GM23248 (cell line): ENCODE measurements at regions of chr18 and their contacts with region 1.

Region 1: DNA sequence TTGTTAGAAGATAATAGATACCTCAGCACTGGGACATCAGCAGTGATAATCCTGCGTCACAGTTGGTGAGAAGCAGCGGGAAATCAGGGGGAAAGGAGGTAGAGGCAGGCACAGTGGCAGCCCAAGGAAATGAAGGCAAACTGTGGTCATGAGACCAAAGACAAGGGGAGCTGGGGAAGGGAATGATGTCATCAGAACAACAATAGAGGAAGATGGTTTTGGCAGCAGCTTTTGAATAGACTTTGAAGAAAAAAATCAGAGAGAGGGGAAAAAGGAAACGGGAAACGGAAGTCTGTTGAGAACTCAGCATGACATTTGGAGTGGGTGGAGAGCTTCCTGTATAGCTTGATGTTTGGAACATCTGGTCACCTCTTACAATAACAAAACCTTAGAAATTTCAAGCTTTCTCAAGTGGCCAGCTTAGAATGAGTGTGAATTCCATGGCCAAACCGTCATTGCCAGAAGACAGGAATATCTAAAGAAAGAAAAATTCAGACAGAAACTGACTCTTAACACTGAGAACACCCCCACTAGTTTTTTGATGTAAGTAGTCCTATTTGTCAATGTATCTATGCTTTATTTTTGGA is 18.4 kb upstream of the YES1 start:
- DNase-seq: peak; percentile 73
- H3K4me3 ChIP-seq: peak overlapping the region; percentile 36
- H3K27ac ChIP-seq: peak overlapping the region; percentile 33
- H3K4me1 ChIP-seq: peaks cover 9% of the 10 kb centered on the region
- H3K27me3 ChIP-seq: no peaks in the 10 kb centered on the region

Region 2: DNA sequence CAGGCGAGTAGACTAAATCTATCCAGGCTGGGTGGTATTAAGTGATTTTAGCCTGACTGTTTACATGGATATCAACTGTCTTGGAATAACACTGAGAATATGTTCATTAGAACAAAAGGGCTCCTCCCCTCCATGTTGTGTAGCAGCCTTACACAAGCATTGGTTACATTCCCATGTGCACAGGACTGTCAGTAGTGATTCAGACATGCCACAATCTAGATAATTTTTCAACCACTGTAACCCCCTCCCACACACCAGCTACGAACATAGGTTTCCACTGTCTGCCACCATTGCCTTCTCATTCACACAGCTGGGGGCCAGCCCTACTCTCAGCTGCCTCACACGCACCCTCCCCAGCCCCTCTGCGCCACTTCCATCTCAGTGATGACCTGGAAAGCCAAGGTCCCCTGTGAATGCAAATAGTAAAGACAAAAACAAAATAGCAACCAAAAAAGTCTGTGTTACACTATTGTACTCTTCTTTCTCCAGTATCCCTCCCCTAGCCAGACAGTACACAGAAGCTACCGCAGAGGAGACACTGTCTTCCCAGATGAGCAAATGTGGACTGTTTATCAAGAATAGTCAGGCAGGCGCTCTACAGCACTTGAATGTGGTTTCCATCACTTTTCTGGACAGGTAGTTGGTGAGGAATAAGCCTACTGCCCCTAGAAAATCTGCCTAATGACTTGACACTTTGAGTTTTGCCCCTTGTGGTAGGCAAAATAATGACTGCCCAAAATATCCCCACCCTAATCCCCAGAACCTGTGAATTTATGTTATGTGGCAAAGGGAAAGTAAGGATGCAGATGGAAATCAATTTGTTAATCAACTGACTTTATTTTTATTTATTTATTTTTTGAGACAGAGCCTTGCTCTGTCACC is 200.9 kb before region 1 on chr18:
- in situ Hi-C with region 1: loop called (anchors 5 kb)
- DNase-seq: no peak
- H3K4me3 ChIP-seq: no peak overlapping the region
- H3K27ac ChIP-seq: no peak overlapping the region
- H3K4me1 ChIP-seq: no peaks in the 10 kb centered on the region
- H3K27me3 ChIP-seq: no peaks in the 10 kb centered on the region

Region 3: DNA sequence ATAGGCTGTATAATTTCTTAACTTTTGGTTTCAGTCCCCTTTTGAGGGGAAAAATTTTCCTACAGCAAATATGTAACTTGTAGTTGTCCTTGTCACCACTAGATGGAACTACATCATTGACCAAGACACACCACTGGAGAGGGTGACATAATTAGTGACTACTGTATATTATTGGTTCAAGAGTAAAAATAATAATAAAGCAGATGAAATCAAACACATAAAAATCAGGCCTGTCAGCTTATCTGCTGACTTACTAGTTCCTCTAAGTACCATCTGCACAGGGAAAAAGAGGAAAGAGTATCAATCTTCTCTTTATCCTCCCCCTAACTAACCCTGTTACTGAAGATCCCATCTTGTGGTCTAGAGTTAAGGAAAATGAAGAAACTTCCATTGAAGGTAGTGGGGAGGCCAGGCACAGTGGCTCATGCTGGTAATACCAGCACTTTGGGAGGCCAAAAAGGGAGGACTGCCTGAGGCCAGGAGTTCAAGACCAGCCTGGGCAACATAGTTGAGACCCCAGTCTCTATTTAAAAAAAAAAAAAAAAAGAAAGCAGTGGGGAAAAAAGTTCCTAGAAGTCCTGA is 88.4 kb before region 1 on chr18:
- in situ Hi-C with region 1: loop called (anchors 5 kb)
- DNase-seq: peak; percentile 68
- H3K4me3 ChIP-seq: no peak overlapping the region
- H3K27ac ChIP-seq: no peak overlapping the region
- H3K4me1 ChIP-seq: peaks cover 6% of the 10 kb centered on the region; the same call in 1 of the 2 replicates
- H3K27me3 ChIP-seq: no peaks in the 10 kb centered on the region

Region 4: DNA sequence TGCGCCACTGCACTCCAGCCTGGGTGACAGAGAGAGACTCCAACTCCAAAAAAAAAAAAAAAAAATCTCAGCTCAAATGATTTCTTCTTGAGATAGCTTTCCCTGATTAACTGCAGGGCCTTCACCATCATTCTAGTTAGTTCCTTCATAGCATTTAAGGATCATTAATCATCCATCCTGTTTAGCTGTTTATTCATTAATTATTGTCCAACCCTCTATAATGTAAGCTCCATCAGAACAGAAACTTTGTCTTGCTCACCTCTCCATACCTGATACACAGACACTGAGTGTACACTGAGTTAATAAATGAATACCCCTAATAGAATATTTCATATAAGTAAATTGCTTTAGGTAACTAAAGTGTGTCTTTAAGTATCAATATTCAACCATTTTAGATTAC is 75.7 kb before region 1 on chr18:
- in situ Hi-C with region 1: no loop called
- DNase-seq: no peak
- H3K4me3 ChIP-seq: no peak overlapping the region
- H3K27ac ChIP-seq: no peak overlapping the region
- H3K4me1 ChIP-seq: no peaks in the 10 kb centered on the region
- H3K27me3 ChIP-seq: no peaks in the 10 kb centered on the region

Region 5: DNA sequence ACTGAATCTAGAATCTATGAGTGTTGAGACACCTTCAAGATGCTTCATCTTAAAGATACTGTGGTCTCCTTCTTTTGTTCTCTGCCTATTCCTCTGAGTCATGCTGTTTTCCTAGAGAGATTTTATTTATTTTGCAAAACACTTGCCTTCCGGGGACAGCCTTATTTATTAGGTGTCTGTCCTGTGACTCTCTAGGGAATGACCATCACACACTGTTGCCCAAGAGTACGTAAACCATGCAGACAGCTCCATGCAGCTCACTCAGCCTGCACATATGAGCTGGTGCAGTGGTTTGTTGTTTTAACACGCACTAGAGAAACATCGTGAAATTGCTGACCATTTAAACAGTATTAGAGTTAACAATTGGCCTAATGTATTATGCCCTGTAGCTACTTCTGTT is 61.9 kb after region 1 on chr18:
- in situ Hi-C with region 1: no loop called
- DNase-seq: no peak
- H3K4me3 ChIP-seq: no peak overlapping the region
- H3K27ac ChIP-seq: no peak overlapping the region
- H3K4me1 ChIP-seq: no peaks in the 10 kb centered on the region
- H3K27me3 ChIP-seq: 0 out of 2 replicates have a peak, but pooled peaks cover 5% of the 10 kb centered on the region

Region 6: DNA sequence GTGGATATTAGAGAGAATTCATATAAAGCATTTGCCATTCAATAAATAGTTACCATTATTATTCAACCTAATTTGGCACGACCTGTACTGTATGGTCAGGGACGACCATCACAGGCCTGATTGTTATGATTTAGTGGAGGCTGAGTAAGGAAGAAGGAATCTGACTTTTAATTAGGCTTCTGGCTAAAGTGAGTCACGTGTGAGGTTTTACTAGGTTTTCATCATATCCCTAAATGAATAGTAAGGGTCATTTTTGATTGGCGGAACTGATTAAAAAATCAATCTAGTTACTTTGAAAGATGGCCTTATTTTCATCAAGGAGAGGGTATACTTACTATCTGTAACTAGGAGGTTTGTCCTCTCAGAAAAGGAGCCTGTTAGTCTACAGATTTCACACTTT is 217.6 kb after region 1 on chr18:
- in situ Hi-C with region 1: no loop called
- DNase-seq: peak; percentile 13
- H3K4me3 ChIP-seq: no peak overlapping the region
- H3K27ac ChIP-seq: no peak overlapping the region; the same call in 1 of the 2 replicates
- H3K4me1 ChIP-seq: no peaks in the 10 kb centered on the region
- H3K27me3 ChIP-seq: no peaks in the 10 kb centered on the region

Region 7: DNA sequence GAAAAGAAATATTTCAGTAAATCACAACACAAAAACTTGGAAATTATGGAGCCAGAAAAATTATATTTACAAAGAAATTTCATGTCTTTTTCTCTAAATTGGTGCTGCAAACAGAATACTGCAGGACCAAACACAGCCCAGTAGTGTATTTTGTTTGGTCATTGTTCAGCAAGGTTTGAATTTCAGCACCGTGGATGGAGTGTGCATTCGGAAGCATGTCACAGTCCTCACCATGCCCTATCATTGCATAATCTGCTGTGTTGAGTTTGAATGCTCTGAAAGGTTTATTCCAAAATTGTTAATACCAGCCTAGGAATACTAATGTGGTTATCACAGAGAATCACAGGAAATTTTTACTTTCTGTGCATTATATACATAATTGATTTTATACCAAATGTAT is 1444.2 kb after region 1 on chr18:
- in situ Hi-C with region 1: no loop called
- DNase-seq: peak; percentile 3
- H3K4me3 ChIP-seq: no peak overlapping the region
- H3K27ac ChIP-seq: no peak overlapping the region
- H3K4me1 ChIP-seq: no peaks in the 10 kb centered on the region
- H3K27me3 ChIP-seq: peaks cover 20% of the 10 kb centered on the region